ENCODE measurements at regions of chr12 and their contacts with region 1.

Region 1: GRCh38 chr12:48142818-48143674 is 14.3 kb downstream of the ASB8 start:
- DNase-seq: no peak
- ATAC-seq: peak; percentile 35
- H3K4me3 ChIP-seq: no peak overlapping the region
- H3K27ac ChIP-seq: no peak overlapping the region
- H3K4me1 ChIP-seq: no peaks in the 10 kb centered on the region; the same call in 1 of the 2 replicates
- H3K27me3 ChIP-seq: no peaks in the 10 kb centered on the region
- CTCF ChIP-seq: no peak
- POLR2A ChIP-seq: no peak
- RAD21 ChIP-seq: no peak

Region 2: DNA sequence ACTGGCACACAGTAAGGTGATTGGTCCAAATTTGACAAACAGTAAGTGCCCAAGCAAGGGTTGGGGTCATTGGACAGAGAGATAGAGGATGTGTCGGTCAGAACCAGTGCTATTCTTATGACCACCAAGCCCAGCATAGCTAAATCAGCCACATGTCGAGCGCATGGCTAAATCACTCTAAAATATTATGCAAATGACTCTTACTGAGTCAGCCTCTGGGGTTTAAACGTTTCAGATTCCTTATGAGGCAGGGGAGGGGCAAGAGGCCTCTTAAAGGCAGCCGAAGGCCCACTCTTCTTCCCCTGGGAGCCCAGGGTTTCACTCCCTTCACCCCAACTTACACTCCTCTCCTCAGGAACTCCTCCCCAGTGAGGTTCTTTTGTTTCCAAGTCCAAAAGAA is 417.2 kb before region 1 on chr12:
- CTCF ChIA-PET with region 1: no interaction called
- POLR2A ChIA-PET with region 1: no interaction called
- dilution Hi-C with region 1: no loop called
- in situ Hi-C with region 1: loop called (anchors 10 kb)
- intact Hi-C with region 1: no loop called
- DNase-seq: peak; percentile 89
- ATAC-seq: peak; percentile 89
- H3K4me3 ChIP-seq: no peak overlapping the region
- H3K27ac ChIP-seq: peak overlapping the region; percentile 24; the same call in 1 of the 2 replicates
- H3K4me1 ChIP-seq: peaks cover 23% of the 10 kb centered on the region
- H3K27me3 ChIP-seq: no peaks in the 10 kb centered on the region
- CTCF ChIP-seq: no peak
- POLR2A ChIP-seq: no peak
- RAD21 ChIP-seq: no peak

Region 3: DNA sequence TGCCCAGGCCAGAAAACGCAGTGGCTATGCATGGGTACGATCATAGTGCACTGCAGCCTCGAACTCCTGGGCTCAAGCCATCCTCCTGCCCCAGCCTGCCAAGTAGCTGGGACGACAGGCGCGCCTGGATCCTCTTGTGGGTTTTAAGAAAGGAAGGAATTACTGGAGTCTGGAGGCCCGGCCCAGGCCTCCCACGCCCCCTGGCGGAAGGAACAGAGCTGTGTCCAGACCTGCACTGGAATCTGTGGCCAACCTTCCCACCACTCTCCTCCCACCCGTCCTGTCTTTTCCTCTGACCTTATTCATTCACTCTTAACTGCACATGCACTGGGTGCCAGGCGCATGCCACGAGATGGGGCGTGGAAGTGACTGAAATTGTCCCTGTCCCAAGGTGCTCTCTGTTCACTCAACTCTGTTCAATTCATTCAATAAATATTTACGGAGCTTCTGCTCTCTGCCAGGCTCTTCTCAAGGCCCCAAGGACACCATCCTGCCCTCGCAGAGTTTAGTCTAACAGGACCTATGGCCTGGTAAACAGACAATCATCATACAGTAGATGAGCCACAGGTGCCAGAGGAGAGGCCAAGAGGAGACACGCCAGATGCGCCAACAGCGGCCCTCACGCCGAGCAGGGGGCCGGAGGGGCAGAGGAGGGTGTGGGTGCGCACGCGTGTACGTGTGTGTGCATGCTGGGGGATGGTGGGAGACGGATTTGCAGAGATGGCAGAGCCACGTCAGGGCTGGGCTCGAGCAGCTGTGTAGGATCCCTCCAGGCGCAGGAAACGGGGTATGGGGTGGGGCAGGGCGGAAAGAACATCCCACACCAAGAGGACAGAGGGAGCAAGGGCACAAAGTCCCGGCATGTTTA is 193.4 kb before region 1 on chr12:
- CTCF ChIA-PET with region 1: no interaction called
- POLR2A ChIA-PET with region 1: no interaction called
- dilution Hi-C with region 1: no loop called
- in situ Hi-C with region 1: no loop called
- intact Hi-C with region 1: no loop called
- DNase-seq: peak; percentile 72
- ATAC-seq: peak; percentile 90
- H3K4me3 ChIP-seq: no peak overlapping the region
- H3K27ac ChIP-seq: no peak overlapping the region
- H3K4me1 ChIP-seq: peaks cover 12% of the 10 kb centered on the region
- H3K27me3 ChIP-seq: peaks cover 20% of the 10 kb centered on the region
- CTCF ChIP-seq: peak; percentile 88
- POLR2A ChIP-seq: no peak
- RAD21 ChIP-seq: peak; percentile 88